ENCODE measurements at regions of chr18 and their contacts with region 1.

Region 1: GRCh38 chr18:21230436-21230835 is 11.6 kb upstream of the GREB1L start:
- DNase-seq: no peak
- ATAC-seq: no peak
- H3K4me3 ChIP-seq: no peak overlapping the region
- H3K27ac ChIP-seq: no peak overlapping the region
- H3K4me1 ChIP-seq: no peaks in the 10 kb centered on the region
- H3K27me3 ChIP-seq: peaks cover 0 to 3% (median 0%) of the 10 kb centered on the region in 7 donors
- CTCF ChIP-seq: no peak

Region 2: DNA sequence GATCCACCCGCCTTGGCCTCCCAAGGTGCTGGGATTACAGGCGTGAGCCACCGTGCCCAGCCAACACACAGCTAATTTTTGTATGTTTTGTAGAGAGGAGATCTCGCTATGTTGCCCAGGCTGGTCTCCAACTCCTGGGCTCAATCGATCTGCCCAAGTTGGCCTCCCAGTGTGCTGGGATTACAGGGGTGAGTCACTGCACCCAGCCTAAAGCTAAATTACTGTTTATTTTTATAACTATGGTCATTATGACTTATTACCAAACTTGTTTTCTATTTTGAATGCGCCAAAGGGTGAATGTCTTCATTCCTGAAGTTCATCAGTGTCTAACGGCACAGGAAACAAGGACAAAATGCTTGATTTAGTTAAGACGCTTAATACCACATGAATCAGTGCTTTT is 27.3 kb before region 1 on chr18:
- intact Hi-C with region 1: loop called in 1 of 10 experiments (anchors 2 kb)
- DNase-seq: no peak
- ATAC-seq: no peak
- H3K4me3 ChIP-seq: no peak overlapping the region
- H3K27ac ChIP-seq: no peak overlapping the region
- H3K4me1 ChIP-seq: no peaks in the 10 kb centered on the region
- H3K27me3 ChIP-seq: peaks cover 0 to 18% (median 5%) of the 10 kb centered on the region in 7 donors
- CTCF ChIP-seq: no peak

Region 3: GRCh38 chr18:21315741-21316187 is 85.3 kb after region 1 on chr18:
- intact Hi-C with region 1: no loop called
- DNase-seq: no peak
- ATAC-seq: peak in 1 of 8 donors; percentile 55
- H3K4me3 ChIP-seq: no peak overlapping the region
- H3K27ac ChIP-seq: no peak overlapping the region
- H3K4me1 ChIP-seq: no peaks in the 10 kb centered on the region
- H3K27me3 ChIP-seq: no peaks in the 10 kb centered on the region
- CTCF ChIP-seq: no peak

Region 4: DNA sequence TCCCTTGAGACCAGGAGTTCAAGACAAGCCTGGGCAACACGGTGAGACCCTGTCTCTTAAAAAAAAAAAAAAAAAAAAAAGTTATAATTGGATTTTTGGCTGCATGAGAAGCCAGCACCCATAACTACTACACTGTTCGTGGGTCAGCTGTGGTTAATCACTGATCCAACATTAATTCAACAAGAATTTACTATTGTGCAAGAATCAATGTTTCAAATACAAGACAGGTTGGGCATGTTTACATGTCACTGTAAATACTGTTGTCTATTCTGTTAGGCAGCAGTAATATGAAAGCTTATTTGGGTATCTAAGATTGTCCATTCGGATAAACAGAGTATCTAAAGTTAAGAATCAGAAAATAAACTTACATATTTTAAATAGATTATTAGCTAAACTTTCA is 307.8 kb after region 1 on chr18:
- intact Hi-C with region 1: no loop called
- DNase-seq: no peak
- ATAC-seq: no peak
- H3K4me3 ChIP-seq: no peak overlapping the region
- H3K27ac ChIP-seq: no peak overlapping the region
- H3K4me1 ChIP-seq: no peaks in the 10 kb centered on the region
- H3K27me3 ChIP-seq: no peaks in the 10 kb centered on the region
- CTCF ChIP-seq: no peak

Measured in heart right ventricle (tissue), 16 donors.